ENCODE measurements at regions of chr6 and their contacts with region 1.

Region 1: DNA sequence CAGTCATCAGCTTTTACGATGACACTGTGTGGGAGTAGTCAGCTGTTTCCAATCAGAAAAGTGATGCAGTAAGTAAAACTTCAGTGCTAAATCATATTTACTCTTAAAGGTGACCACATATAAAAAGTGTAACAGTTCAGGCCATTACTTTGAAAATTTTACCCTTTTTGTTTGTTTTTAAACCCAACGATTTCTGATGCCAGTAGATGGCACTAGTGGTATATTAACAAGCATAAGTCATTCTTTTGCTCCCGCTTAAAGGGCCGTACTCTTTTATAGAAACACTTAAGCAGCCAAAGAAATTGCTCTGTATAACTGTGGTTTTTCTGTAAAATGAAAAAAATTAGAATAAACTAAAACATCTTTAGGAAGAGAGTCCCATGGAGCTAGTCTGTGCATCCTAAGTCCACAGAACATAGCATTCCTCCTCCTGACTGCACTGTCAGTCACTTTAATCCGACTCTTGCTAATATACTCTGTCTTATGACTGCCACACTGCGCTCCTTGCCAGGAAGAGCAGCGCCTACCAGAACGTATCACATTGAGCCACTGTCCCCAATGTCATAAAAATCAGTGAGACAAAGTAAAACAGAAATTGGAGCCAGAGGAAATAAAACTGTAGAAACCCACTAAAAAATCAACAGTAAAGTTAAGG is 25.0 kb downstream of the HEBP2 start:
- DNase-seq: no peak
- H3K4me3 Mint-ChIP-seq: no peak overlapping the region
- H3K27ac Mint-ChIP-seq: no peak overlapping the region
- H3K4me1 Mint-ChIP-seq: no peaks in the 10 kb centered on the region
- H3K27me3 Mint-ChIP-seq: no peaks in the 10 kb centered on the region
- CTCF ChIP-seq: peak; percentile 24

Region 2: GRCh38 chr6:138509371-138509770 is 80.3 kb after region 1 on chr6:
- CTCF ChIA-PET with region 1: interaction called, 6 read pairs
- intact Hi-C with region 1: loop called (anchors 1 kb)
- DNase-seq: peak; percentile 54
- H3K4me3 Mint-ChIP-seq: no peak overlapping the region
- H3K27ac Mint-ChIP-seq: no peak overlapping the region
- H3K4me1 Mint-ChIP-seq: peaks cover 32% of the 10 kb centered on the region
- H3K27me3 Mint-ChIP-seq: no peaks in the 10 kb centered on the region
- CTCF ChIP-seq: peak; percentile 20

Region 3: DNA sequence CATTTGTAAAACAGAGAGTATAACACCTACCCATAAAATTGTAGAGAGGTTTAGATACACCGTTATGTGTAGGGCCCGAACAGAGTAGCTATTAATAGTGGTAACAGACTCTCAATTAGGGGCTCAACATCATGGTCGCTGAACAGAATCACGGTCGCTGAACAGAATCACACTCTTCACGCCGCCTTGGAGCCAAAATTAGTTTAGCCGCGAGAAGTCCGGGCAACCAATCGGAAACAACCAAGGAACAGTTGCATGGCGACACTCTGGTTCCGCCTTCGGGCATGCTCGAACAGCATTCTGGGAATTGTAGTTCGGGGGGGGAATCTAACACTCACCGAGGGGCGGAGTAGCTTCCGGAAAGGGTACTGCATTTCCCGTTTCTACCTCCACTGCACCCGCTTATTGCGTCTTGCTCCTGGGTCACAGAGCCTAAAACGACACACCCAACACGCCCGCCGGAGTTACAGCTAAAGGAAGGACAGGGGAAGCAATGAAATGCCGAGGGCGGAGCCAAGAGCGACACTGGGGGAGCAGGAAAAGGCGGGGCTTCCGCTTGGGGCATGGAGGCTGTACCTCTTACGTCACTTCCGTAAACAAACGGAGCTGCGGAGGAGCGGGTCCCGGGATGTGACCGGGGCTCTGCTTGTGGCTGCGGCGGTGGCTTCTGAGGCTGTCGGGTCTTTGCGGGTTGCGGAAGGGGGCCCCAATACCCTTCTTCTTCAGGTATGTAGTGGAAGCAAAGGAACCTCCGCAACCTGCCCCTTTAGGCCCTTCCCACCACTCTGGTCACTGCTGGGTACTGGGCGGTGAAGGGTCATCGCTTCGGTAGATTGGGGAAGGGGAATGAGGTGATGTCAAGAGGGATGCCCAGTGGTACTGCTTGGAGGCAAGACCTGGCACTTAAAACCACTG is 344.4 kb after region 1 on chr6 and contains the start of gene CCDC28A:
- CTCF ChIA-PET with region 1: no interaction called
- intact Hi-C with region 1: loop called (anchors 10 kb)
- DNase-seq: peak; percentile 82
- H3K4me3 Mint-ChIP-seq: peak within 1 kb of the TSS; percentile 95
- H3K27ac Mint-ChIP-seq: peak within 1 kb of the TSS; percentile 99
- H3K4me1 Mint-ChIP-seq: no peaks in the 10 kb centered on the region
- H3K27me3 Mint-ChIP-seq: no peaks in the 10 kb centered on the region
- CTCF ChIP-seq: no peak
- total RNA-seq, gene CCDC28A: 9.8 and 12.1 TPM in 2 replicates